AG04450 (cell line): ENCODE measurements at regions of chr12 and their contacts with region 1.

Region 1: GRCh38 chr12:106955377-106956047 is at the start of gene TMEM263:
- DNase-seq: peak; percentile 91
- H3K4me3 ChIP-seq: peak within 1 kb of the TSS; percentile 76
- H3K27ac ChIP-seq: peak within 1 kb of the TSS; percentile 94
- H3K27me3 ChIP-seq: no peaks in the 10 kb centered on the region
- CTCF ChIP-seq: no peak
- polyA plus RNA-seq, gene TMEM263: 86.0 and 118 TPM in 2 replicates

Region 2: DNA sequence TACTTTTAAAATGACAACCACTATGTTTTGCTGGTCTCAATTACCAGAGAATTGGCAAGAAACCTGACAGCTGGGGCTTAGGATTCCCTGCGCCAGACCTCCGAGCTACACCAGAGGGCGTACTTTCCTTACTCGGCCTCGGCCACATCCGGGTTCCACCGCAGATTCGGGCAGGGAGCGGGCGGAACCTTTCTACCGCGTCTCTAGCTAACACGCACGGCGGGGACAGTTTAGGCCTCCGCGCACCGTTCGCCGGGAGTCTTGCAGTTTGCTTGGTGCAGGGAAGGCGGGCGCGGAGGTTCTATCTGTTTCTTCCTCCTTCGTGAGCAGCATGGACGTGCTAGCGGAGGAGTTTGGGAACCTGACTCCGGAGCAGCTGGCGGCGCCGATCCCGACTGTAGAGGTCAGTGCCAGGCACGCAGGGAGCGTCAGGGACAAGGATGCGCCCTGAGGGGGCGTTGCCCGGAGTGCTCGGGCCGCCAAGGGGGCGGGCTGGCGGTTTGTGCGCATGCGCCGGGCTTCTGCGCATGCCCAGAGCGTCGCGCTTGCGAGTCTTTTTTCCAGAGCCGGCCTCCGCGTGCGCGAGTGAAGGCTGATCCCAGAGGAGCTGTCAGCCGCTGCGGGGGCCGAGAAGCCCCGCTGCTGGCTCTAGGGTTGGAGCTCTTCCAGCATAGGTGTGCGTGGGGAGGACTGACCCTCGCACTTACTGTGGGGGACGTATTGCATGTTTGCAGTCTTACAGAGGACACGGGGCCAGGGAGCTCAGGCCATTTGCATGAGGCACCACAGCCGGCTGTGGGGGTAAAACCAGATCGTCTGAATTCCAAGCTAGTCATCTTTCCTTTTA is 597.7 kb before region 1 on chr12 and contains the start of gene POLR3B:
- CTCF ChIA-PET with region 1: interaction called, 4 read pairs
- POLR2A ChIA-PET with region 1: interaction called, 15 read pairs
- DNase-seq: peak; percentile 92
- H3K4me3 ChIP-seq: peak within 1 kb of the TSS; percentile 92
- H3K27ac ChIP-seq: peak within 1 kb of the TSS; percentile 97
- H3K27me3 ChIP-seq: peaks cover 2% of the 10 kb centered on the region
- CTCF ChIP-seq: peak; percentile 95
- polyA plus RNA-seq, gene POLR3B: 11.0 and 14.1 TPM in 2 replicates

Region 3: GRCh38 chr12:106903241-106903945 is 52.1 kb before region 1 on chr12:
- CTCF ChIA-PET with region 1: interaction called, 3 read pairs
- POLR2A ChIA-PET with region 1: interaction called, 12 read pairs
- DNase-seq: no peak
- H3K4me3 ChIP-seq: peak overlapping the region; percentile 58
- H3K27ac ChIP-seq: no peak overlapping the region
- H3K27me3 ChIP-seq: peaks cover 11% of the 10 kb centered on the region
- CTCF ChIP-seq: no peak

Region 4: DNA sequence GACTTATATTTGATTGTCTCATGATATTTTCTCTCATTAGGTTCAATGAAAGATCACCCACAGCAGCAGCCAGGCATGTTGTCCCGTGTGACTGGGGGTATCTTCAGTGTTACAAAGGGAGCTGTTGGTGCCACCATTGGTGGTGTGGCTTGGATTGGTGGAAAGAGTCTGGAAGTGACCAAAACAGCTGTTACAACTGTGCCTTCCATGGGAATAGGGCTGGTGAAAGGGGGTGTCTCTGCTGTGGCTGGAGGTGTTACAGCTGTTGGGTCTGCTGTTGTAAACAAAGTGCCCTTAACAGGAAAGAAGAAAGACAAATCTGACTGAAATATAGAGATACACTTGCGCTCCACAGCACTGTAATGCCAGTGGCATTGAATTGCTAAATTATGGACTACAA is 15.6 kb after region 1 on chr12:
- CTCF ChIA-PET with region 1: interaction called, 3 read pairs
- POLR2A ChIA-PET with region 1: interaction called, 25 read pairs
- DNase-seq: no peak
- H3K4me3 ChIP-seq: no peak overlapping the region
- H3K27ac ChIP-seq: no peak overlapping the region
- H3K27me3 ChIP-seq: no peaks in the 10 kb centered on the region
- CTCF ChIP-seq: no peak

Region 5: DNA sequence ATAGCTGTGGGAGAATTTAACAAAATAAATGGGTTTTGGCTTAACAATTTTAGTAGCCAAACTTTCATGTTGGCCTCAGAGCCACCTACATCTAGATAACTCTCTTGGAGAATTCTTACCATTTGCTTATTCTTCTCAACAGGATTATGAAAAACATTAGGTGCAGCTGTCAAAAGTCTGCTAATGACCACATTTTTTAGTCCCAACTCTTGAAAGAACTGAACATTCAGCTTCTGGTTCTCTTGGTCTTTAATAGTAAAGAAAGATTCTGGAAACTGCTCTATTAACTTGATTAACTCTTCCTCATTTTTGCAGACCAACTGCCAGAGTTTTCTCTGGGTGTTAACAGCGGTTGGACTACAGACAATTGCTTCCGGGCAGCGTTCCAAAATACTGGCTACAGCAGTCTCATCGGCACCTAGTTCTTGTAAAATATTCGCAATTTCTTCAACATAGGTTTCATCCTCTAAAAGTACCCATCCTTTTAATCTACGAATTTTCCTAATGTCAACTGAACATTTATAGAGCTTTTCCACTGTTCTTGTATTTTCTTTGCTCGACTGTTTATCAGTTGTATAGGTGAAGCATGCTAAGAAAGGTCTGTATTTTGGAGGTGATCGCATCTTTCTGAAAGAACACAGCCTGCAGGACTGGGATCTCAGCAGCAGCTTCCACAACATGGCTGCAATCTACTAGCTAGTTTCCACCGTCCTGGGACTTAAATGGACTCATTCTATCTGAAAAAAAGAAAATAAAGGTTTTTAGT is 22.7 kb after region 1 on chr12:
- CTCF ChIA-PET with region 1: no interaction called
- POLR2A ChIA-PET with region 1: interaction called, 25 read pairs
- DNase-seq: no peak
- H3K4me3 ChIP-seq: no peak overlapping the region
- H3K27ac ChIP-seq: no peak overlapping the region
- H3K27me3 ChIP-seq: no peaks in the 10 kb centered on the region
- CTCF ChIP-seq: no peak

Region 6: DNA sequence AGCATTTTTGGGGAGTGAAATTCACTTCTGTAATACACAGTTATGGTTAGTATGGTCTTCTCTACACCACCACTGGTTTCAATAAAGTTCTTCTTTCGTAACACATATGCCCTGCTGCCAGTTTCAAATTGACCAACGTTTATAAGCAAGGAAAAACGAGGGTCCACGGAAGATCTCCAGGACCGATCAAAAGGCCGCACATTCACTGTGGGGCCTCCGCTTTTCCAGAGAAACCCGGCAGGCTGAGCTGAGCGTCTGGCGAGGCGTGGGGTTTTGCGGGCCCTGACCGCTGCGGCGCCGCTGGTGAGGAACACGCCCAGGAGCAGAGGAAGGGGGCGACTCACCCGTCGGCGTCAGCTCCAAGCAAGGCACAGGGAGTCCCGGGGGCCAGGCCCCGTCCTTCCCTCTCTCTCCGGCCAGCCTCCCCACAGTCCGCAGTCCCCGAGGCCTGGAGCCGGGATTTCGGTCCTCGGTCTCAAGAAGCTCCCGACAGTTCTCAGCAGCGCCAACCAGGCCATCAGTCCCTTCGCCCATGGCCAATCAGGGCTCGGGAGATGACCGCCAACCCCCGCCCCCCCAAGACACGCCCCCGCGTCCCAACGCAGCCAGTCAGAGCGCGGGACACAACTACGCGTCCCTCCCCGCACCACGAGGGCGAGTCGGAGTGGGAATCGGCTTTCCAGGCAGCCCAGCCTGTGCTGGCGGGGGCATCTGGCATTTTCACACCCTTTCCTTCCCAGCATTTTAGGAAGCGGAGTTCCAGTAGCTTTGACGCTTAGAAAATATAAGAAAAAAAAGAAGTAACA is 31.3 kb after region 1 on chr12 and contains the start of gene MTERF2:
- CTCF ChIA-PET with region 1: interaction called, 3 read pairs
- POLR2A ChIA-PET with region 1: interaction called, 44 read pairs
- DNase-seq: peak; percentile 68
- H3K4me3 ChIP-seq: peak within 1 kb of the TSS; percentile 82
- H3K27ac ChIP-seq: peak within 1 kb of the TSS; percentile 82
- H3K27me3 ChIP-seq: no peaks in the 10 kb centered on the region
- CTCF ChIP-seq: 0 out of 2 replicates have a peak, but pooled peaks have one; percentile 11
- polyA plus RNA-seq, gene MTERF2: 5.0 and 7.5 TPM in 2 replicates

Region 7: GRCh38 chr12:107093417-107094182 is 138.1 kb after region 1 on chr12 and contains the start of gene CRY1:
- CTCF ChIA-PET with region 1: interaction called, 15 read pairs
- POLR2A ChIA-PET with region 1: interaction called, 9 read pairs
- DNase-seq: peak; percentile 86
- H3K4me3 ChIP-seq: peak within 1 kb of the TSS; percentile 93
- H3K27ac ChIP-seq: peak within 1 kb of the TSS; percentile 99
- H3K27me3 ChIP-seq: no peaks in the 10 kb centered on the region
- CTCF ChIP-seq: no peak
- polyA plus RNA-seq, gene CRY1: 10.3 and 13.7 TPM in 2 replicates